ENCODE measurements at regions of chr17 and their contacts with region 1.

Region 1: GRCh38 chr17:56779898-56780733 is 53.6 kb downstream of the C17orf67 start:
- DNase-seq: peak; percentile 81 to 90 (median 86)
- ATAC-seq: peak; percentile 100
- H3K4me3 ChIP-seq: no peak overlapping the region
- H3K27ac ChIP-seq: no peak overlapping the region
- H3K4me1 ChIP-seq: peaks cover 0 to 9% of the 10 kb centered on the region in 2 experiments; a peak in 3 of 5 replicates
- H3K27me3 ChIP-seq: peaks cover 29 to 36% of the 10 kb centered on the region in 2 experiments
- CTCF ChIP-seq: peak; percentile 95 to 96 (median 95)
- EP300 ChIP-seq: no peak
- POLR2A ChIP-seq: no peak
- RAD21 ChIP-seq: peak; percentile 86 to 92

Region 2: GRCh38 chr17:56499799-56500388 is 280.2 kb before region 1 on chr17:
- CTCF ChIA-PET with region 1: no interaction called
- POLR2A ChIA-PET with region 1: no interaction called
- in situ Hi-C with region 1: no loop called
- intact Hi-C with region 1: loop called (anchors 2 kb)
- DNase-seq: peak; percentile 19 to 40 (median 22)
- ATAC-seq: no peak
- H3K4me3 ChIP-seq: no peak overlapping the region
- H3K27ac ChIP-seq: no peak overlapping the region
- H3K4me1 ChIP-seq: no peaks in the 10 kb centered on the region
- H3K27me3 ChIP-seq: no peaks in the 10 kb centered on the region
- CTCF ChIP-seq: peak; percentile 44 to 65 (median 55); a peak in 5 of 6 replicates
- EP300 ChIP-seq: no peak
- POLR2A ChIP-seq: no peak
- RAD21 ChIP-seq: peak; percentile 36 to 64; a peak in 3 of 4 replicates

Region 3: DNA sequence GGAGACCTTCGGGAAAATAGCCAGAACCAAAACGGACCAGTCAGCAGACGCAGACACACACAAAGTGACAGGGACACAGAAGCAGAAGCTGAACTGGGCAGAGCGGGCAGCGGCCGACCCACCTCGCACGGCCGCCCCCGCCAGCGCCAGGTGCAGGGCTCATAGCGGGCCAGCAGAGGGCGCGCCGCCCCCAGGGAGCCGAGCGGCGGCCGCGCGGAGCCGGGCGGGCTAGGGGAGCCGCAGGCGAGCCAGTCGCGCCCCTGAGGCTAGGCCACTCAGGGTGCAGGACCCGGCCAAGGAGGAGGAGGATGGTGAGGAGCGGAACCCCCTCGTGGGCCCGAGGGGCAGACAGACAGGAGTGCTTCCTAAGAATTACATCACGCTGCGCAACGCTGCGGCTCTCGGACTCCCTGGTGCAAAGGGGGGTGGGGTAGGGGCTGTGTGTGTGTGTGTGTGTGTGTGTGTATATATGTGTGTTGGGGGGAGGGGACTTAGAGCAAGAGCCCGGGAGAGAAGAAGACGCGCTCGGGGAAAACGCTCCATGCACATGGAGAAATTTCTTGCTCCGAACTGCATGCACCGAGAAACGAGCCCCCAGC is 187.5 kb before region 1 on chr17:
- CTCF ChIA-PET with region 1: interaction called, 12 read pairs
- POLR2A ChIA-PET with region 1: no interaction called
- in situ Hi-C with region 1: no loop called
- intact Hi-C with region 1: loop called (anchors 1 kb)
- DNase-seq: peak; percentile 52 to 88 (median 82)
- ATAC-seq: peak; percentile 96
- H3K4me3 ChIP-seq: no peak overlapping the region
- H3K27ac ChIP-seq: no peak overlapping the region
- H3K4me1 ChIP-seq: peaks cover 0 to 22% of the 10 kb centered on the region in 2 experiments; a peak in 2 of 5 replicates
- H3K27me3 ChIP-seq: peaks cover 17 to 28% of the 10 kb centered on the region in 2 experiments
- CTCF ChIP-seq: peak; percentile 67 to 88 (median 76)
- EP300 ChIP-seq: no peak
- POLR2A ChIP-seq: no peak
- RAD21 ChIP-seq: peak; percentile 84 to 91

Region 4: GRCh38 chr17:56715613-56716357 is 64.3 kb before region 1 on chr17:
- CTCF ChIA-PET with region 1: interaction called, 5 read pairs
- POLR2A ChIA-PET with region 1: no interaction called
- in situ Hi-C with region 1: no loop called
- intact Hi-C with region 1: loop called (anchors 2 kb)
- DNase-seq: peak; percentile 74 to 83 (median 80)
- ATAC-seq: peak; percentile 99
- H3K4me3 ChIP-seq: no peak overlapping the region
- H3K27ac ChIP-seq: no peak overlapping the region
- H3K4me1 ChIP-seq: no peaks in the 10 kb centered on the region
- H3K27me3 ChIP-seq: peaks cover 2 to 29% of the 10 kb centered on the region in 2 experiments
- CTCF ChIP-seq: peak; percentile 78 to 86 (median 80)
- EP300 ChIP-seq: no peak
- POLR2A ChIP-seq: no peak
- RAD21 ChIP-seq: peak; percentile 75 to 86